PC-9 (cell line): ENCODE measurements at regions of chr17 and their contacts with region 1.

Region 1: DNA sequence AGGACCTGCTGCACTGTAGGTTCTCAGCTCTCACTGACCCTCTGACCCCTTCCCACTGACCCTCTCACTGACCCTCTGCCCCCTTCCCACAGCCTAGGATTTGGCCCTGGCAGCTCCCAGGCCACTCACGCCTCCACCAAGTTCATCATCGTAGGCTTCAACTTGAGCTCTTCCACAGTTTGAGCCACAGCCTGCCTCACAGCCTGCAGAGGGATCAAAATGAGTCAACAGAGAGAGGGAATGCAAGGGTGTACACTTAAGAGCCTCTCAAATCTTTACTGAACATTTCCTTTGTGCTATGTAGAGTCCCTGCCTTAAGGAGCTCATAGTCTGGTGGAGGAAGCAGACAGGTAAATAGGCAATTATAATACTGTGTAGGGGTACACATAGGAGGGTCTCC is 12.1 kb downstream of the HEATR9 start:
- DNase-seq: no peak
- H3K4me3 ChIP-seq: no peak overlapping the region
- H3K27ac ChIP-seq: no peak overlapping the region
- H3K4me1 ChIP-seq: no peaks in the 10 kb centered on the region
- H3K27me3 ChIP-seq: no peaks in the 10 kb centered on the region
- CTCF ChIP-seq: no peak

Region 2: DNA sequence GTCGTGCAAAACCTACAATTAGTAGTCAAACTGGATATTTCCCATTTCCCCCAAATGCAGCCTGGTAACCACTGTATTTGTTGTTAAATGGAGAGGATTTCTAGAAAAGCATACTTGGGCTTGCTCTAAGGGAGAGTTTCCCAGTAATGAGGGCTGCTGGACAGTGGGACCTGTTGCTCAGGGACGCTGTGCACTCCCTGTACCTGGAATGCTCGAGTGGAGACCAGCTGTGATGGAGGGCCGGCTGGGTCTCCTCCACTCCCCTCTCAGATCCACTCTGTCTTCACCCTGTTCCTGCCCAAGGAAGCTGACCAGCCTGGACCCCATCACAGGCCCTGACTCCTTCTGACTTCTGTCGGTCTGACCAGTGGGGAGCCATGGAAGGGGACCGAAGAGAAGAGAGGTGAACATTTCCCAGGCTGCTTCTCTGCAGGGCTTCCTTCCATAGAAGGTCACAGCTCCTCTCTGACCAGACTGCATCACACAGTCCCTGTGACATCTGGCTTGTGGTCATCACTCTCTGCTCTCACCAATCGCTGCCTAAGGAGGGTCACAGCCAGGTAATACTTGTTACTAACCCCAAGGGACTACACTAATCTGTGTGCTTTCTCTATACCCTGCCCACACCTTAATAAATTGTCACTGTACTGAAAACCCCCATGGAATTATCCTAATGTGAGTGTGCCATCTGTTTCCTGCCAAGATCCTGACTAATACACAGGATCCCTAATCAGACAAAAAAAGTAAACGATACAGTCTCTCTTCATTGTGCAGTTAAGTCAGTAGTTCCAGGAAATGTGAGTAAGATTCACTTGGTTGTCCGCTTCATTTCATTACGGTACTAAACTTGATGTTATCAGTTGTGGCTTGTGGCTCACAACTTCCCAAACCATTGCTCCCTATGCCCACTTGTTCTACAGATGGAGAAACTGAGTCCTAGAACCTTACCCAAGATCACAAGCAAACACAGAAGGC is 997.7 kb before region 1 on chr17:
- CTCF ChIA-PET with region 1: no interaction called
- POLR2A ChIA-PET with region 1: no interaction called
- intact Hi-C with region 1: no loop called
- DNase-seq: no peak
- H3K4me3 ChIP-seq: no peak overlapping the region
- H3K27ac ChIP-seq: no peak overlapping the region
- H3K4me1 ChIP-seq: no peaks in the 10 kb centered on the region
- H3K27me3 ChIP-seq: peaks cover 77% of the 10 kb centered on the region
- CTCF ChIP-seq: no peak

Region 3: GRCh38 chr17:35700150-35700549 is 156.5 kb before region 1 on chr17:
- CTCF ChIA-PET with region 1: interaction called, 11 read pairs
- POLR2A ChIA-PET with region 1: no interaction called
- intact Hi-C with region 1: no loop called
- DNase-seq: no peak
- H3K4me3 ChIP-seq: no peak overlapping the region
- H3K27ac ChIP-seq: no peak overlapping the region
- H3K4me1 ChIP-seq: no peaks in the 10 kb centered on the region
- H3K27me3 ChIP-seq: no peaks in the 10 kb centered on the region
- CTCF ChIP-seq: no peak

Region 4: GRCh38 chr17:36148559-36149295 is 292.1 kb after region 1 on chr17:
- CTCF ChIA-PET with region 1: interaction called, 3 read pairs
- POLR2A ChIA-PET with region 1: interaction called, 26 read pairs
- intact Hi-C with region 1: no loop called
- DNase-seq: peak in 1 of 2 experiments; percentile 41
- H3K4me3 ChIP-seq: no peak overlapping the region
- H3K27ac ChIP-seq: no peak overlapping the region
- H3K4me1 ChIP-seq: no peaks in the 10 kb centered on the region
- H3K27me3 ChIP-seq: peaks cover 45% of the 10 kb centered on the region
- CTCF ChIP-seq: peak; percentile 95